ENCODE measurements at regions of chrX and their contacts with region 1.

Region 1: DNA sequence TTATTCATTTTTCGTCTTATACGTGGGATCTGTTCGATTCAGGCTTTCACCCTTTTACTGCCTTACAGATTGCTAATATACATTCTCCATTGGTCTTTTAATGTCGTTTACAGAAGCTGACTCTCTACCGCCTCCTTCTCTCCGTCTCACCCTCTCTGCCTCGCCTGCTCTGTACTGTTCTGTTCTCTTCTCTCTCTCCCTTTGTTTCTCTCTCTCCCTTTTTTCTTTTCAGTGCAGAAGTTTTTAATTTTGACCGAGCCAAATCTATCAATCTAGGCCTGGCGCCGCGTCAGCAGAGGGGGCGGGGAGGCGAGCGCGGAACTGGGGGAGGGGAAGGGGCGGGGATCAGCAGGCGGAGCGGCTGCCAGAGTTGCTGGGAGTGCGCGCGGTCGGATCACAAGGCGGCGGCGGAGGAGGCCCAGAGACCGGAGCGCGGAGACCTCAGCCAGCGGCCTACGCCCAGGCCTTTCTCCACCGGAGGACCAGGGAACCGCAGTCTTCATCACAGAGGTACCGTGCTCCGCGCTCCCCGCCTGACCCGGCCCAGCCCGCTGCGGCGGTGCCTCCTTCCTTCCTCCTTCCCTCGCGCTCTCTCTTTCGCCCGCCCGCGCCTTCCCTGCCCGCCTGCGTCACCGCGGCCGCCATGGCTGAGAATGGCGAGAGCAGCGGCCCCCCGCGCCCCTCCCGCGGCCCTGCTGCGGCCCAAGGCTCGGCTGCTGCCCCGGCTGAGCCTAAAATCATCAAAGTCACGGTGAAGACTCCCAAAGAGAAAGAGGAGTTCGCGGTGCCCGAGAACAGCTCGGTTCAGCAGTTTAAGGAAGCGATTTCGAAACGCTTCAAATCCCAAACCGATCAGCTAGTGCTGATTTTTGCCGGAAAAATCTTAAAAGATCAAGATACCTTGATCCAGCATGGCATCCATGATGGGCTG is at the start of gene UBQLN2:
- DNase-seq: peak; percentile 92
- H3K4me3 Mint-ChIP-seq: peak within 1 kb of the TSS; percentile 92
- H3K27ac Mint-ChIP-seq: peak within 1 kb of the TSS; percentile 99
- H3K4me1 Mint-ChIP-seq: peaks cover 11% of the 10 kb centered on the region
- H3K27me3 Mint-ChIP-seq: no peaks in the 10 kb centered on the region
- total RNA-seq, gene UBQLN2: 37.8 and 38.5 TPM in 2 replicates

Region 2: DNA sequence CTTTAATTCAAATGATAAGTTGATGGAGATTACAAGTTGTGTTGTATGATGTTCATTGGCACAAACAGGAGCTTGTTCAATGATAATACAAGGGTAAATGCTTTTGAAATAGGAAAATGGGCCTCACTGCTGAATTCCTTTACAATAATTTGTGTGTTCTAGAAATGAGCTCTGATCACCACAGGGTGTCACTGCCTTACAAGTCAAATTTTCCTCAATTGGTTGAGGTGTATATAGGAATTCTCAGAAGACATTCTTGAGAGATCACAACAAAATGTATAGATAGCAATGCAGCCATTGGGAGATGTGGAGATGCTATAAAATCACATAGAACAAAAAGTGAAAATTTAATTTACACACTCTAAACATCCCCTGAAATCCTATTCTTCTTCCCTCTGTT is 281.7 kb before region 1 on chrX:
- intact Hi-C with region 1: loop called (anchors 5 kb)
- DNase-seq: peak; percentile 76
- H3K4me3 Mint-ChIP-seq: no peak overlapping the region
- H3K27ac Mint-ChIP-seq: no peak overlapping the region
- H3K4me1 Mint-ChIP-seq: peaks cover 10% of the 10 kb centered on the region
- H3K27me3 Mint-ChIP-seq: no peaks in the 10 kb centered on the region

Region 3: DNA sequence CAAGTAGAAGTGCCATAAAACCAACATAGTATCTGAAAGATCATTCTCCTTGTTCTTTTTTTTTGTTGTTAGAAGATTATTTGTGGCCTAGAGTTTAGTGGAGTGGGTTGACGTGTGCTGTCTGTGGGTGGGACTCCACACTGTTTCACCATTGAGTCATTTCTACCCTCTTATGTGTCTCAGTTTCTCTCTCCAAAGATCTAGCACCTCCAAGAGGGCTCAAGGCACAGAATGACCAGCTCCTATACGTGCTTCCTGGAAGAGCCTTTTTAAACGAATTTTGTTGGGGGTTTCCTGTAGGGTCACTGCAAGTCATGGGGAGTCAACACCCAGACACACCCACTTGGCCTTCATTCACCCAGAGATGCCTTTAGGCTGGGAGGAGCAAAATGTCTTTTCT is 181.2 kb before region 1 on chrX:
- intact Hi-C with region 1: loop called (anchors 5 kb)
- DNase-seq: peak; percentile 62
- H3K4me3 Mint-ChIP-seq: peak overlapping the region; percentile 54
- H3K27ac Mint-ChIP-seq: peak overlapping the region; percentile 88
- H3K4me1 Mint-ChIP-seq: peaks cover 30% of the 10 kb centered on the region
- H3K27me3 Mint-ChIP-seq: no peaks in the 10 kb centered on the region

Region 4: DNA sequence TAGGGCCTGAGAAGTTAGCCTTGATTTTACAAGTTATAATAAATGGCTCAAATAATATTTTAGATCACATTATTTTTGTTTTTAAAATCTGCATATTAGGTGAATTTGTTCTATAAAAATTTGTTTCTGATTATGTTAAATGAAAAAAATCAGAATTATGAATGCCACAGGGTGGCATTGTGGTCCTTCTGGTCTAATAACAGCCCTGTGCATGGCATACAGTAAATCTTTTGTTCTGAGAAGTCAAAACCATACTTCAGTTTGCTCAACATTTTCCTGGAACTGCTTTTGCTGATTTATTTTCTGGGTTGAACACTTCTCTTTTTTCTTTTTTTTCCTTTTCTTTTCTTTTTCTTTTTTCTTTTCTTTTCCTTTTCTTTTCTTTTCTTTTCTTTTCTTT is 101.1 kb before region 1 on chrX:
- intact Hi-C with region 1: loop called (anchors 10 kb)
- DNase-seq: no peak
- H3K4me3 Mint-ChIP-seq: no peak overlapping the region
- H3K27ac Mint-ChIP-seq: no peak overlapping the region
- H3K4me1 Mint-ChIP-seq: peaks cover 5% of the 10 kb centered on the region
- H3K27me3 Mint-ChIP-seq: no peaks in the 10 kb centered on the region

Region 5: DNA sequence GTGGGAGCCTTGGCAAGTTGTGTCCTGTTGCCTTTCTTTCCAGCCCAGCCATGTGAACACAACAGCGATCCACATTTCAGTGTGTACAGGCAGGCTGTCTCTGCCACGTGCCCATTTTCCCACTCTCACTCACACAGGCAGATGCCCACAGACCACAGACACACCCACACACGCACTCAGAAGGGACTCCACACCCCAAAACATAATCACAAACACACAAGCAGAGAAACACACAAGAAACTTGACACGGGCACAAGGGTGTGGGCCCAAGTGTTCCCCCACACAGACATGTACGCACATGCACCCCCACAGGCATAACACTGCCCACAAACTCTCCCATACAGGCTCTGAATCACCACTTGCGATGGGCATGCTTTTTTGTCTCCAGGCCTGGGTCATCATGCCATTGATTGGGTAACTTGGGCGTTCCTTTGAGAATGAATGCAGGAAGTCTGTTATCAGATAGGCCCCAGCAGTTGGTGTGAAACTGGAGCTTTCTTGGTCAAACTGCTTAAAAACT is 249.9 kb after region 1 on chrX:
- intact Hi-C with region 1: loop called (anchors 5 kb)
- DNase-seq: peak; percentile 83
- H3K4me3 Mint-ChIP-seq: peak overlapping the region; percentile 82
- H3K27ac Mint-ChIP-seq: peak overlapping the region; percentile 99
- H3K4me1 Mint-ChIP-seq: peaks cover 25% of the 10 kb centered on the region
- H3K27me3 Mint-ChIP-seq: no peaks in the 10 kb centered on the region

Region 6: DNA sequence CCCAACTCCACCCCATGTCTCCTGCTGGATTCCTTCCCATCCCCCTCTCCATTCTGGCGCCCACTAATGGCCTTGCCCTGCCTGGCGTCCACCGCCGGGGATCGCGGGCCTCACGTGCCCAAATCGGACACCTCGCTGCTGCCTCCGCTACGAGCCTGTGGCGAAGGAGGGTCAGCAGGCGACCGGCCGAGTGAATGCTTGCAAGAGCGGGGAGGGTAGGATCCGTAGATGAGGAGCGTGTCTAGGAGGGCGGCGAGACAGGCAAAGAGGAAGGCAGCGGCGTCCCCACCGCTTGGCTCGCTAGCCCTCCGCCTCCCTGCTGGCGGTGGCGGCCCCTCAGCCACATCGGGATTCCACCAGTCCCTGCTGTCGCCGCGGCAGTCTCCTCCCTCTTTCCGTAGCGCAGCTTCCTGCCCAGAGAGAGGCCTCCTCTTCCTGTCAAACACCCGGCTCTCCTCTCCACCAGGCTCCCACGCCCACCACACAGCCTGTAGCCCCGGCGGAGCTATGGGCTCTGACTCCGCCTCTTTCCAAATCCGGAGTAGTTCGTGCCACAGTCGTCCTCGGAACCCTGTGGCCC is 557.8 kb after region 1 on chrX and contains the start of gene SPIN2B:
- intact Hi-C with region 1: loop called (anchors 5 kb)
- DNase-seq: peak; percentile 93
- H3K4me3 Mint-ChIP-seq: peak within 1 kb of the TSS; percentile 93
- H3K27ac Mint-ChIP-seq: peak within 1 kb of the TSS; percentile 90
- H3K4me1 Mint-ChIP-seq: peaks cover 8% of the 10 kb centered on the region
- H3K27me3 Mint-ChIP-seq: no peaks in the 10 kb centered on the region
- total RNA-seq, gene SPIN2B: 8.7 and 9.5 TPM in 2 replicates